Heart left ventricle (tissue), 16 donors: ENCODE measurements at regions of chr18 and their contacts with region 1.

Region 1: DNA sequence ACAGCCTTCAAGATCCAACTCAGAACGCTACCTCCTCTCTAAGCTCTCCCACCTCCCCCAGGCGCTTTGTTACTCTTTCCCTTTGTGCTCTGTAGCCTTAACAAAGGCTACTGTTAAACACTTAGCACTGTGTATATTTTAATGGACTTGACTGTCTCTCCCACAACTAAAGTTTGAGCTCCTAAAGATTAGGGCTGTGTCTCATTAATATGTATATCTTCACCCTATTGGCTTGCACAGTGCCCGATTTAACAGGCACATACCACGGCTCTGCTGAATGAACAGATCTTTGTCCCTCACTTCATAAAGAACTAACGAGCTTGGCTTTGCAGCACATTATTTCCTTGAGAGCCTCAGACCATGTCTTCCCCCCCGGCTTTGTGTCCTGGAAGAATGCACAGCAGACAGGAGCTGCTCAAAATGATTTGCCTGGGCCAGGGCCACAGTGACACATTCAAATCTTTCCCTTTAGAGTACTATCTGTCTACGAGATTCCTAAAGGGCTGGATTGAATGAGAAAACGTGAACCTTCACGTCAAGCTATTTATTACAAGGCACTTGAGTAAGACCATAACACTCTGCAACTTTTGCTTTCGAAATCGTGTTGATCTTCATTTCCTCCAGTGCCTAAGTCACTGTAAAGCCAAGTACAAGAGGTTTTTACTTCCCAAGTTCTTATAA is 22.1 kb downstream of the ABHD3 start:
- DNase-seq: no peak
- ATAC-seq: peak in 3 of 4 donors; percentile 76 to 77 (median 76)
- H3K4me3 ChIP-seq: peak overlapping the region in 10 of 12 donors; percentile 31 to 57 (median 42)
- H3K27ac ChIP-seq: peak overlapping the region; percentile 29 to 94 (median 56)
- H3K4me1 ChIP-seq: peaks cover 0 to 50% (median 4%) of the 10 kb centered on the region in 12 donors
- H3K27me3 ChIP-seq: no peaks in the 10 kb centered on the region
- CTCF ChIP-seq: no peak
- POLR2A ChIP-seq: no peak

Region 2: GRCh38 chr18:21632393-21632792 is 50.1 kb before region 1 on chr18:
- intact Hi-C with region 1: loop called in 1 of 10 experiments (anchors 10 kb)
- DNase-seq: no peak
- ATAC-seq: no peak
- H3K4me3 ChIP-seq: no peak overlapping the region
- H3K27ac ChIP-seq: no peak overlapping the region
- H3K4me1 ChIP-seq: peaks cover 0 to 4% (median 0%) of the 10 kb centered on the region in 12 donors
- H3K27me3 ChIP-seq: no peaks in the 10 kb centered on the region
- CTCF ChIP-seq: peak in 1 of 12 donors; percentile 8
- POLR2A ChIP-seq: no peak

Region 3: DNA sequence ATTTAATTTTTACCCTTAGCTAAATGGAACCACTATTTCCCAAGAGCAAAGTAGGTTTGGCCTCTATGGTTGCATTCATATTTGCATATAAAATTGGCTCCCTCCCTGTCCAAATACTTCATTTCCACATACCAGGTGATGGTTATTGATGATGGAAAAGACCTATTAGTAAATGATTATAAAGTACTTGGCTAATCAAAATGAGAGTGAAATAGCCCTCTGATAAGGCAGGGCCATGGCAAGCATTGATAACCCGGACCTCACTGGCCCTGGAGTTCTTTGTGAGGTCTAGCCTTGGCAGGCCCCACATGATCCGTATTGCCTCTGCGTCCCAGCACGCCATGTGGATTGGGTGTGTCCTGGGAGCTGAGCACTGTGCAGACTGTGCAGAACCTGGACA is 285.8 kb after region 1 on chr18:
- intact Hi-C with region 1: no loop called
- DNase-seq: no peak
- ATAC-seq: no peak
- H3K4me3 ChIP-seq: no peak overlapping the region
- H3K27ac ChIP-seq: no peak overlapping the region
- H3K4me1 ChIP-seq: no peaks in the 10 kb centered on the region
- H3K27me3 ChIP-seq: no peaks in the 10 kb centered on the region
- CTCF ChIP-seq: no peak
- POLR2A ChIP-seq: no peak